H1 (cell line): ENCODE measurements at regions of chr2 and their contacts with region 1.

Region 1: GRCh38 chr2:237413777-237414661 is at the start of gene COL6A3:
- DNase-seq: no peak
- H3K4me3 ChIP-seq: no peak within 1 kb of the TSS
- H3K27ac ChIP-seq: no peak within 1 kb of the TSS
- H3K4me1 ChIP-seq: peaks cover 0 to 6% (median under 1%) of the 10 kb centered on the region in 4 experiments; a peak in 3 of 7 replicates
- H3K27me3 ChIP-seq: no peaks in the 10 kb centered on the region
- CTCF ChIP-seq: no peak
- EP300 ChIP-seq: no peak
- POLR2A ChIP-seq: no peak
- RAD21 ChIP-seq: no peak
- total RNA-seq, gene COL6A3: 3.4 and 3.5 TPM in 2 replicates

Region 2: GRCh38 chr2:237154082-237154638 is 259.9 kb before region 1 on chr2:
- CTCF ChIA-PET with region 1: interaction called, 21 read pairs
- POLR2A ChIA-PET with region 1: no interaction called
- DNase-seq: peak in 1 of 2 experiments; percentile 67
- H3K4me3 ChIP-seq: no peak overlapping the region
- H3K27ac ChIP-seq: no peak overlapping the region
- H3K4me1 ChIP-seq: no peaks in the 10 kb centered on the region; a peak in 2 of 7 replicates
- H3K27me3 ChIP-seq: no peaks in the 10 kb centered on the region
- CTCF ChIP-seq: peak; percentile 69 to 91 (median 78)
- EP300 ChIP-seq: no peak
- POLR2A ChIP-seq: no peak
- RAD21 ChIP-seq: peak; percentile 99

Region 3: DNA sequence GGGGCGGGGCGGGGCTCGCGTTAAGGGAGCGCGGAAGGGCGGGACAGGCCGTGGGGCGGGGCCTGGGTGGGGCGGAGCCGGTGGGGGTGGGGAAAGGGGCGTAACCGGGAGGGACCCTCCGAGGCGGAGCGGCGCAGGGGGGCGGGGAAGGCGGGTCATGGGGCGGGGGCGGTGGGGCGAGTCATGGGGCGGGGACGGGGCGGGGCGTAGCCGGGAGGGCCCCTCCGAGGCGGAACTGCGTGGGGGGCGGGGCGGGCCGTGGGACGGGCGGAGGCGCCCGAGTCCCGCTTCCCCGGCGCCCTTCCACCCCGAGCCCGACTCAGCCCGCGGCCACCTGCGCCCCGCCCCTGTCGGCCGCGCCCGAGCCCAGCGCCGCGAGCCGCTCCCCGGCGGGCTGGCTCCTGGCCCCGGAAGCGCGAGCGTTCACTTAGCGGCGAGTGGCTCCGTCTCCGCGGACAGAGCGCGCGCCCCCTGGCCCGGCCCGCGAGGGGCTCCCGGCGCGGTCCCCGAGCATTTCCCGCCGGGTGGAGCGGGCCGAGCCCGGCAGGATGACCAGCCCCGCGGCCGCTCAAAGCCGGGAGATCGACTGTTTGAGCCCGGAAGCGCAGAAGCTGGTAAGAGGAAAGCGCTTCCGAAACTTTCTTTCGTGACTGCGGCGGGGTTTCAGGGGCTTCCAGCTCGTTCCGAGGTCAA is 278.0 kb after region 1 on chr2:
- CTCF ChIA-PET with region 1: no interaction called
- POLR2A ChIA-PET with region 1: no interaction called
- DNase-seq: peak in 1 of 2 experiments; percentile 65
- H3K4me3 ChIP-seq: peak overlapping the region; percentile 74 to 90 (median 82)
- H3K27ac ChIP-seq: no peak overlapping the region
- H3K4me1 ChIP-seq: peaks cover 7 to 20% (median 13%) of the 10 kb centered on the region in 4 experiments
- H3K27me3 ChIP-seq: peaks cover 0 to 9% (median 3%) of the 10 kb centered on the region in 4 experiments; a peak in 3 of 7 replicates
- CTCF ChIP-seq: no peak
- EP300 ChIP-seq: no peak
- POLR2A ChIP-seq: no peak; a peak in 1 of 3 replicates
- RAD21 ChIP-seq: no peak